ENCODE measurements at regions of chr1 and their contacts with region 1.

Region 1: DNA sequence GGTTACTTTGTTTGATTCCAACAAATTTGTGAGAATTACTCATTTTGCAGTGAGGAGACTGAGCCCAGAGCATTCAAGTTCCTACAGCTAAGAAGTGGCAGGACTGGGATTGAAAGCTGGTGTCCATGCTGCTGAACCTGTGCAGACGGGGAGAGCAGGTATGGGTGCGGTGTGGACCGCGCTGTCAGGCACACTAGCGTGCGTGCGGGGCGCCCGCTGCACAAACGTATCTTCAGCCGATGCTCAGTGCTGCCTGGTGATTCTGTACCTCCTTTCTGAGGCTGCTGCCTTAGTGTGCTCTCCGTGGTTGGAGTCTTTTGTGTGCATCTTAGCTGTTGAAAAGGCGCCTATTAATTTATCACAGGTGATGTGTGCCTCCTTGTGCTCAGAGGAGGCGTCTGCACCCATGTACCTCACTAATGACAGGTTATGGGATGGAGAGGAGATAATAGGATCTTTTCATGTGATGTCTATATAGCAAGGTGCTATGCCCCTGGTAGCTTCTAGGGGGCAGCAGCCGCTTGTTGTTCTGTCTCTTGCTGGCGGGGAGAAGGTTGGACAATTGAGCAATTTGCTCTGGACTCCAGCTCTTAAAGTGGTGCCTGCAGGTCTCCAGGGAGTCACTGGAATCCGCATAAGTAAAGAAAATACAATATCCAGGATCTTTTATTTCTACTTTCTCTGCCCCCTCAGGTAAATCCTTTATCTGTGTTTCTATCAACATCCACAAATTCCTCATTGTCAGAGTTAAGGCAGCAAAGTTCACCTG is 32.5 kb downstream of the PEX14 start:
- DNase-seq: peak; percentile 63 to 82 (median 74)
- ATAC-seq: peak; percentile 83
- H3K4me3 ChIP-seq: no peak overlapping the region
- H3K27ac ChIP-seq: no peak overlapping the region
- H3K4me1 ChIP-seq: peaks cover 24 to 30% of the 10 kb centered on the region in 2 experiments
- H3K27me3 ChIP-seq: no peaks in the 10 kb centered on the region
- CTCF ChIP-seq: peak; percentile 90 to 98 (median 97)
- EP300 ChIP-seq: no peak
- POLR2A ChIP-seq: no peak
- RAD21 ChIP-seq: peak; percentile 87 to 95

Region 2: GRCh38 chr1:10032590-10033358 is 474.5 kb before region 1 on chr1 and contains the start of gene UBE4B:
- CTCF ChIA-PET with region 1: no interaction called
- POLR2A ChIA-PET with region 1: no interaction called
- in situ Hi-C with region 1: no loop called
- intact Hi-C with region 1: no loop called
- DNase-seq: peak; percentile 98 to 99 (median 99)
- ATAC-seq: peak; percentile 93
- H3K4me3 ChIP-seq: peak within 1 kb of the TSS; percentile 62
- H3K27ac ChIP-seq: peak within 1 kb of the TSS; percentile 97
- H3K4me1 ChIP-seq: peaks cover 3 to 14% of the 10 kb centered on the region in 2 experiments; a peak in 2 of 5 replicates
- H3K27me3 ChIP-seq: no peaks in the 10 kb centered on the region
- CTCF ChIP-seq: peak; percentile 91 to 98 (median 95)
- EP300 ChIP-seq: peak; percentile 53; the same call in 1 of the 2 replicates
- POLR2A ChIP-seq: peak; percentile 89
- RAD21 ChIP-seq: peak; percentile 81 to 84
- polyA plus RNA-seq, gene UBE4B: 11.7 to 24.9 TPM

Region 3: GRCh38 chr1:10424034-10424433 is 83.3 kb before region 1 on chr1:
- CTCF ChIA-PET with region 1: no interaction called
- POLR2A ChIA-PET with region 1: no interaction called
- in situ Hi-C with region 1: no loop called
- intact Hi-C with region 1: no loop called
- DNase-seq: peak in 1 of 4 experiments; percentile 28
- ATAC-seq: peak; percentile 42
- H3K4me3 ChIP-seq: no peak overlapping the region
- H3K27ac ChIP-seq: no peak overlapping the region
- H3K4me1 ChIP-seq: peaks cover 0 to 5% of the 10 kb centered on the region in 2 experiments; a peak in 3 of 5 replicates
- H3K27me3 ChIP-seq: no peaks in the 10 kb centered on the region
- CTCF ChIP-seq: 0 out of 6 replicates have a peak, but pooled peaks of 1 of the 3 experiments have one; percentile 6
- EP300 ChIP-seq: no peak
- POLR2A ChIP-seq: no peak
- RAD21 ChIP-seq: no peak

Region 4: GRCh38 chr1:10484521-10484920 is 22.8 kb before region 1 on chr1:
- CTCF ChIA-PET with region 1: no interaction called
- POLR2A ChIA-PET with region 1: no interaction called
- in situ Hi-C with region 1: no loop called
- intact Hi-C with region 1: no loop called
- DNase-seq: no peak
- ATAC-seq: no peak
- H3K4me3 ChIP-seq: no peak overlapping the region
- H3K27ac ChIP-seq: no peak overlapping the region
- H3K4me1 ChIP-seq: no peaks in the 10 kb centered on the region
- H3K27me3 ChIP-seq: no peaks in the 10 kb centered on the region
- CTCF ChIP-seq: no peak
- EP300 ChIP-seq: no peak
- POLR2A ChIP-seq: no peak
- RAD21 ChIP-seq: no peak

Region 5: DNA sequence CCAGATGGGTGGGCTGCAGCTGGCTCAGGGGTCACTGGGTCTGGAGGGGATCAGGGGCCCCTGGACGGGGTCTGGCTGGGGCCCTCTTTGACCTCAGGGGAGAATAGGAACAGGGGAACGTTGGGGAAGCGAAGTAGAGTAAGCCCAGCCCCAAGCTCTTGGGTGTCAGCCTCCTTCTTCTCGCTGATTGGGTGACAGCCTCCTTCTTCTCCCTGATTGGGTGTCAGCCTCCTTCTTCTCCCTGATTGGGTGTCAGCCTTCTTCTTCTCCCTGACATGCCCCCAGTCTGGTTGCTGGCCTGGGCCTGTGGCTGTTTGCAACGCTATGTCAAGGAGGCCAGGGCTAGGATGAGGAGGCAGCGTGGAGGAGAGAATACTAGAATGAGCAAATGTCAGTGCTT is 365.9 kb after region 1 on chr1:
- CTCF ChIA-PET with region 1: no interaction called
- POLR2A ChIA-PET with region 1: no interaction called
- in situ Hi-C with region 1: loop called (anchors 5 kb)
- intact Hi-C with region 1: no loop called
- DNase-seq: peak; percentile 40 to 63 (median 58)
- ATAC-seq: peak; percentile 87
- H3K4me3 ChIP-seq: no peak overlapping the region
- H3K27ac ChIP-seq: no peak overlapping the region
- H3K4me1 ChIP-seq: no peaks in the 10 kb centered on the region
- H3K27me3 ChIP-seq: peaks cover 35 to 66% of the 10 kb centered on the region in 2 experiments
- CTCF ChIP-seq: no peak
- EP300 ChIP-seq: no peak
- POLR2A ChIP-seq: no peak
- RAD21 ChIP-seq: no peak

Region 6: DNA sequence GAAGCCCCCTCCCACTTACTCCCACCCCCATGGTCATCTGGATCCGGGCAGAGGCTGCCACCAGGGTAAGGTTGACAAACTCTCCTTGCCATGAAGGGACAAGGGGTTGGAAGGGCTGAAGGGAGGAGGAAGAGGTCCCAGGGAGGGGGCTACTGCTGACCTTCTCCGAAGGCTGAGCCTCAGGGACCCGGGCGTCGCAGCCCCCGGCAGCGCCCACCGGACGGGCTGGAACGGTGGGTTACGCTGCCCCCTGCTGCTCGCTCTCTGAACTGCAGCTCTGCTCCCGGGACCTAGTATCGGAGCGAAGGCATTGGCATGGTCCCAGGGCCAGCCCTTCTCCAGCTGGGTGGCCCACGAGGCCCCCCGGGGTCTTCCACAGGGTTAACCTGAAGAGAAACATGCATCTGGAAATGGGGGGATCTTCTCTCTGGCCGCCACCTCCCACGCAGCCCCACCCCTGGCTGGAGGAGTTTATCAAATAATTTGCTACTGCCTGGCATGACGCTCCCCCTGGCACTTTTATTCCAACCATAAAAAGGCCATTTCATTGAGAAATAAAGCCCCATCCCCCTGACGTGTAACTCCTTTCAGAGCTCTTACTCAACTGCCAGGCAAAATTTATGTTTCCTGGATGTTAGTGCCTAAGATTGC is 434.7 kb after region 1 on chr1:
- CTCF ChIA-PET with region 1: interaction called, 8 read pairs
- POLR2A ChIA-PET with region 1: interaction called, 3 read pairs
- in situ Hi-C with region 1: loop called (anchors 5 kb)
- intact Hi-C with region 1: loop called (anchors 10 kb)
- DNase-seq: peak; percentile 62 to 92 (median 87)
- ATAC-seq: peak; percentile 64
- H3K4me3 ChIP-seq: no peak overlapping the region
- H3K27ac ChIP-seq: no peak overlapping the region
- H3K4me1 ChIP-seq: peaks cover 0 to 18% of the 10 kb centered on the region in 2 experiments; a peak in 4 of 5 replicates
- H3K27me3 ChIP-seq: peaks cover 52 to 86% of the 10 kb centered on the region in 2 experiments
- CTCF ChIP-seq: peak; percentile 81 to 96 (median 84)
- EP300 ChIP-seq: no peak
- POLR2A ChIP-seq: no peak
- RAD21 ChIP-seq: peak; percentile 47 to 84

Region 7: DNA sequence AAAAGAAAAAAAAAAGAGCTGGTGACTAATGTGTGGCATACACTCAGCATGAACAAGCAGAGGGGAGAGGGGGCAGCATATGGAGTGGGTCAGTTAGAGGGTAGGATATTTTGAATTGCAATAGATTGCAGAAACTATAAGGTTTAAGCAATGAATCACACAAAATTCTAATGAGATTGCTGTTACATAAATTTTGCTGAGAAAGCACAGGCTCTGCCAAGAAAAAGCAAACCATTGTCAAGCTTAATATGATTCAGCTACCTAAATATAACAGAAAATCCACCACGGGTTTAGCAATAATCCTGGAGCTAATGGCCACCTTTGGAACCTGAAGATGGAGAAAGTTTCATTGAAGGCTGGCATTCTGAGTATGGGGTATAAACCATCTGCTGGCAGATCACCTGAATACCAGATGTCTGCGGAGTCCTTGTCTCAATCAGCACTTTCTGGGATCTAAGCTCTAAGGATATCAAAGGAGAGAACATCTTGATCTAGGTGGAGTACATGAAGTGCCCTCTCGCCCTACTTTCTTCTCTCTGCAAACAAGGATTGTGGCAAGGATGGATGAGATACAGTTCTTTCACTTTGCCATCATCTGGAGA is 651.5 kb after region 1 on chr1:
- CTCF ChIA-PET with region 1: no interaction called
- POLR2A ChIA-PET with region 1: no interaction called
- in situ Hi-C with region 1: no loop called
- intact Hi-C with region 1: no loop called
- DNase-seq: no peak
- ATAC-seq: no peak
- H3K4me3 ChIP-seq: no peak overlapping the region
- H3K27ac ChIP-seq: no peak overlapping the region
- H3K4me1 ChIP-seq: no peaks in the 10 kb centered on the region
- H3K27me3 ChIP-seq: no peaks in the 10 kb centered on the region
- CTCF ChIP-seq: no peak
- EP300 ChIP-seq: no peak
- POLR2A ChIP-seq: no peak
- RAD21 ChIP-seq: no peak